ENCODE measurements at regions of chr7 and their contacts with region 1.

Region 1: DNA sequence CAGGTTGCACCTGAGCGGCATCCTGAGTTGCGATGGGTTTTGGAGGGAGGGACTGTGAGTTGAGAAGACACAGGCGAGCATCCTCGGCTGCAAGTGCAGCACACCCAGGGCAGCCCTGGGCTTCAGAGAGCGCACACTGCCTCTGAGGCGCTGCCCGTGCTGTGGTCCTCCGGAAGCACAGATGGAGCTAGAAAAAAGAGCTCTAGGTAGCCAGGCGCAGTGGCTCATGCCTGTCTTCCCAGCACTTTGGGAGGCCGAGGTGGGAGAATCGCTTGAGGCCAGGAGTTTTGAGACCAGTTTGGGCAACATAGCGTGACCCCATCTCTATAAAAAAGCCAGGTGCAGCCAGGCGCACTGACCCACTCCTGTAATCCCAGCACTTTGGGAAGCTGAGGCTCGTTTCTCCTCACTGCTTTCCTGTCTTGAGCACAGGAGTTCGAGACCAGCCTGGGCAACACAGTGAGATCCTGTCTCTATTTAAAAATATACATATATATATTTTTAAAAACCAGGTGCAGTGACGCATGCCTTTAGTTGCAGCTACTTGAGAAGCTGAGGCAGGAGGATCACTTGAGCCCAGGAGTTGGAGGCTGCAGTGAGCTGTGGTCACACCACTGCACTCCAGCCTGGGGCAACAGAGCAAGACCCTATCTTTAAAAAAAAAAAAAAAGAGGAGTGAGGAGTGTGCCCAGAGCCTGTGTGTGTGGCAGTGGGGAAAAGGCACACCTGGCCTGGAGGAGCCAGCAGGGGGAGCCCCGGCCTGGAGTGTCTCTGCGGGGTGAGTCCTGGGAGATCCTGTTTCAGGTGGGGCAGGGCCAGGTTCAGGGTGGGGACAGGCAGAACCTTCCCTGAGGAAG is 9.3 kb upstream of the ARPC1B start:
- DNase-seq: peak; percentile 78
- H3K4me3 Mint-ChIP-seq: no peak overlapping the region
- H3K27ac Mint-ChIP-seq: no peak overlapping the region
- H3K4me1 Mint-ChIP-seq: peaks cover 20% of the 10 kb centered on the region
- H3K27me3 Mint-ChIP-seq: no peaks in the 10 kb centered on the region

Region 2: GRCh38 chr7:99386584-99387238 is 21.5 kb after region 1 on chr7:
- CTCF ChIA-PET with region 1: interaction called, 13 read pairs
- DNase-seq: peak; percentile 58
- H3K4me3 Mint-ChIP-seq: no peak overlapping the region
- H3K27ac Mint-ChIP-seq: peak overlapping the region; percentile 64
- H3K4me1 Mint-ChIP-seq: peaks cover 29% of the 10 kb centered on the region
- H3K27me3 Mint-ChIP-seq: no peaks in the 10 kb centered on the region

Region 3: DNA sequence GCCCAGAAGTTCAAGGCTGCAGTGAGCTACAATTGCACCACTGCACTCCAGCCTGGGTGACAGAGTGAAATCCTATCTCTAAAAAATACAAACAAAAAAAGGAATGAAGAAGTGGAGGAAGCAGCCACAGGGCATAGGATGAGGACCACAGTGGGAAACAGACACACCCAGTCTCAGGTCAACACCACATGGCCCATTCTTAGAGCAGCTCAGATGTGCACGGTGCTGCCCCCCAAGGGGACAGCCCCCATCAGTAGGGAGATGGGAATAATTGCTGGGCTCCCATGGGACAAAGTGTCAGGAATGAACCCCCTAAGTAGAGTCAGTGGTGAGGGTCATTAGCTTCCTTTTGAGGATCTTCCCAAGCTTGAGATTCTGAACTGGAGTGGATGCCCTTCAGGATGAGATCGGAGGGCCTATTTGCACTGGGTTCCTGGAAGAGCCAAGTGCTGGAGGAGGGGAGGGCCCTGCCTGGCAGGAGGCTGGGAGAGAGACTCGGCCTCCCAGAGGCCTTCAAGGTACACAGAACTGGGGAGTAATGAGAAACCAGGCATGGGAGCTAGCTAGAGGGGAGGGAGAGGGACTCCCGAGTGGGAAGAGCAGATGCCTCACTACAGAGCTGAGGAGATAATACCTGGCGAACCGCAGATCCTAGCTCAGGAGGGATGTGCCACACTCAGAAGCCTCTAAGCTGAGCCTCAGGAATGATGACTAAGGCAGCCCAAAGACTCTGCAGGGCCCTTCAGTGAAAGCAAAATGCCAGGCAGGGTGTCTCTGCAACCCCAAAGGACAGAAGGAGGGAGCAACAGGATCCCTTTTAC is 33.6 kb after region 1 on chr7:
- CTCF ChIA-PET with region 1: interaction called, 12 read pairs
- DNase-seq: no peak
- H3K4me3 Mint-ChIP-seq: peak overlapping the region; percentile 21
- H3K27ac Mint-ChIP-seq: peak overlapping the region; percentile 6
- H3K4me1 Mint-ChIP-seq: peaks cover 7% of the 10 kb centered on the region
- H3K27me3 Mint-ChIP-seq: no peaks in the 10 kb centered on the region

Measured in activated naive CD4-positive, alpha-beta T cell treated with anti-CD3 and anti-CD28 coated beads, Interleukin-2, amount 10 ng/mL, durations not matched to agents 7 days and 5 days (primary cell).